Head of caudate nucleus (tissue), 42 donors: ENCODE measurements at regions of chr5 and their contacts with region 1.

Region 1: GRCh38 chr5:36875790-36876388 is 680 bp upstream of the NIPBL start:
- DNase-seq: peak; percentile 50 to 92 (median 83)

Region 2: GRCh38 chr5:36619012-36619635 is 256.8 kb before region 1 on chr5:
- intact Hi-C with region 1: no loop called
- DNase-seq: no peak

Region 3: GRCh38 chr5:36739751-36740221 is 136.1 kb before region 1 on chr5:
- intact Hi-C with region 1: loop called (anchors 5 kb)
- DNase-seq: peak in 41 of 42 donors; percentile 13 to 87 (median 63)

Region 4: GRCh38 chr5:36944607-36945225 is 68.8 kb after region 1 on chr5:
- intact Hi-C with region 1: loop called (anchors 10 kb)
- DNase-seq: peak in 1 of 42 donors; percentile 6